ENCODE measurements at regions of chr15 and their contacts with region 1.

Region 1: GRCh38 chr15:48358229-48358641 is 27.0 kb downstream of the DUT start:
- DNase-seq: peak; percentile 68
- H3K4me3 ChIP-seq: peak overlapping the region; percentile 14
- H3K27ac ChIP-seq: peak overlapping the region; percentile 55
- H3K4me1 ChIP-seq: peaks cover 30% of the 10 kb centered on the region
- H3K27me3 ChIP-seq: no peaks in the 10 kb centered on the region
- CTCF ChIP-seq: peak; percentile 82

Region 2: DNA sequence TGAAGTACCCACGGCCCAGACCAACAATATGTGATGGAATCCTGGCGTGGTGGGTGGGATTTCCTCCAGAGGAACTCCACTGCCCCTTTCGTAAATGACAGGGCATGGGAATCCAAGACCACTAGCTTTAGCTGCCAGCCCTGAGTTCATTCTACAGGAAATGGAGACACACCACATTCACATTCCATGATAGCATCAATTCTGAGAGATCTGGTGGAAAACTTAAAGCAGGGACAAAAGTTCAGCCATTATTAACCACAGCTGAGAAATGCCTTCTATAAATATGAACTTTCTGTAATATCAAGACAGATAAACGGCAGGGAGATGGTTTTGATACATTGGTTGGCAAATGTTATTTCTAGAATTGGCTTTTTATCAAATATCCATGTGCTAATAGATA is 189.1 kb after region 1 on chr15:
- CTCF ChIA-PET with region 1: no interaction called
- POLR2A ChIA-PET with region 1: interaction called, 12 read pairs
- intact Hi-C with region 1: no loop called
- DNase-seq: no peak
- H3K4me3 ChIP-seq: no peak overlapping the region
- H3K27ac ChIP-seq: no peak overlapping the region
- H3K4me1 ChIP-seq: peaks cover 3% of the 10 kb centered on the region
- H3K27me3 ChIP-seq: no peaks in the 10 kb centered on the region
- CTCF ChIP-seq: no peak

Region 3: DNA sequence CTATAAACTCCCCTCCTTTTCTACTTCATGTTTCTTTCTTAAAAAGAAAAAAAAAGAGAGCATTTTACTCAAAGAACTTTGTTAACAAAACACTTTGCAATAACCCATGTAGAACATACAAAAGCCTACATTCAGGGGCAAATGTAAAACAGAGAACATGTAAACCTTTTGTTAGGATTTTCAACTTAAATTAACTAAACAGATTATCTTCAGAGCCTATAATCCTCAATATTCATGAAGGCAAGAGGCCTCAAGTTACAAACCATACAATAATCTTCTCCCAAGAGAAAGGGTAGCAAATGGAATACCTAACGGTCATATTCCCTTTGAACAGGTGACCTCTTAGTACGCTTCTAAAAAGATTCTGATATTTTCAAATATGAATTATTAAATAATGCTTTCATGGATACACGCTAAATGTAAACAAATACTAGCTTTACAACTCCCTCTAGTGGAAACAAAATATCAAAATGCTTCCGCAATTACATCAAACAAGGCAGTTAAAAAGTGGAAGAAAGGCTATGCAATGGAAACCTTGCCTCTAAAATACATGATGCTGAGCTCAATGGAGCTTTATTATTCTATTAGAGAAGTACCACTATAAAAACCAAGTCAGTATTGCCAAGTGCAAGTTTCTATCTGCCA is 442.7 kb after region 1 on chr15:
- CTCF ChIA-PET with region 1: no interaction called
- POLR2A ChIA-PET with region 1: no interaction called
- intact Hi-C with region 1: loop called (anchors 2 kb)
- DNase-seq: peak; percentile 50
- H3K4me3 ChIP-seq: no peak overlapping the region
- H3K27ac ChIP-seq: peak overlapping the region; percentile 39
- H3K4me1 ChIP-seq: peaks cover 55% of the 10 kb centered on the region
- H3K27me3 ChIP-seq: no peaks in the 10 kb centered on the region
- CTCF ChIP-seq: peak; percentile 70

Region 4: DNA sequence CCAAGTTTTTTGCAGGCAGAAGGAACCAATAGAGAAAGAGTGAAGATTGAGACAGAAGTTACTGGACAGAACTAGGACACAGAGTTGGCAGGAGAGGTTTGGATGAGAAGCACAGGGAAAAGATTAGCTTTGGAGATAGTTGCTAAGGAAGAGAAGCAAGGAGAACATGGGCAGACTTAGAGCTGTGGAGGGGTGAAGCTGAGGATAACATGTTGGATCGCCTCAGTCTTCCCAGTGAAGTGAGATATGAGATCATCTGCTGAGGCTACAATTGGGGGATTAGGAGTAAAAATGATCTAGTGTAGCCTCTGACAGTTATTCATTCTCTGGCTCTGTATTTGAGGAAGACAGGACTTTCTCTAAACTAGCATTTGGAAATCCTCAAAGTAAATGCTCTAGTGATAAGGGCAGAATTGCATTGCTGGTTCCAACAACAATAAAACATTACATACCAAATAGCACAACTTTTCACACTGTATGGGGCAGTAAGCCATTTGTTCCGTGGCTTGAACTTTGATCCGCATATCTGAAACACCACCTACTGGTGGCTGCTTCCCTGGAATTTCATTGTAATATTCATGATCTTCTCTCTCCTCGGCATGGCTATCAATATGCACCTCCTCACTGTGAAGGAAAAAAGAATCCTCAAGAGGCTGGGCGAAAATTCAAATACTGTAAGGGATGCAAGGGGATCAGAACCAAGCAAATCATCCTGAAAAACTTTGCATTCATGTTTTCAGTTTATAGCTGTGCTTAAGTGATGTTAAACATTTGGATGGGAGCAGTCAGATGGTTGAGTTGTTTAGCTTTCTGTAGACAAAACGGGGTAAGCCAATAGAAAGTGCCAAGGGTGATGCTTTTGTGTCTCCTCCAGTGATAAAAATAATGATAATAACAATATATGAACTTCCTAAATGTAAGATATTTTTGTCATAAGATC is 497.5 kb after region 1 on chr15:
- CTCF ChIA-PET with region 1: interaction called, 7 read pairs
- POLR2A ChIA-PET with region 1: no interaction called
- intact Hi-C with region 1: loop called (anchors 5 kb)
- DNase-seq: peak; percentile 62
- H3K4me3 ChIP-seq: no peak overlapping the region
- H3K27ac ChIP-seq: no peak overlapping the region
- H3K4me1 ChIP-seq: peaks cover 19% of the 10 kb centered on the region
- H3K27me3 ChIP-seq: no peaks in the 10 kb centered on the region
- CTCF ChIP-seq: peak; percentile 67

Measured in A673 (cell line).